Lower leg skin (tissue), 4 donors: ENCODE measurements at regions of chr4 and their contacts with region 1.

Region 1: GRCh38 chr4:168707205-168707604 is 210.4 kb downstream of the PALLD start:
- DNase-seq: no peak
- H3K4me3 ChIP-seq: no peak overlapping the region
- CTCF ChIP-seq: no peak
- POLR2A ChIP-seq: no peak

Region 2: GRCh38 chr4:168917138-168917779 is 210.1 kb after region 1 on chr4:
- intact Hi-C with region 1: loop called (anchors 10 kb)
- DNase-seq: no peak
- H3K4me3 ChIP-seq: no peak overlapping the region
- CTCF ChIP-seq: no peak
- POLR2A ChIP-seq: no peak